ENCODE measurements at regions of chr6 and their contacts with region 1.

Region 1: GRCh38 chr6:43608310-43608763 is 20.7 kb downstream of the GTPBP2 start:
- DNase-seq: peak in 8 of 9 donors; percentile 12 to 49 (median 43)
- ATAC-seq: peak; percentile 57
- H3K4me3 ChIP-seq: no peak overlapping the region
- H3K4me3 Mint-ChIP-seq: no peak overlapping the region
- H3K27ac ChIP-seq: no peak overlapping the region
- H3K27ac Mint-ChIP-seq: peak overlapping the region in 4 of 9 donors; percentile 0 to 16 (median 4)
- H3K4me1 ChIP-seq: no peaks in the 10 kb centered on the region
- H3K4me1 Mint-ChIP-seq: peaks cover 0 to 10% (median 5%) of the 10 kb centered on the region in 7 donors
- H3K27me3 ChIP-seq: no peaks in the 10 kb centered on the region
- H3K27me3 Mint-ChIP-seq: no peaks in the 10 kb centered on the region

Region 2: GRCh38 chr6:43635387-43636307 is 27.3 kb after region 1 on chr6 and contains the start of gene MAD2L1BP:
- CTCF ChIA-PET with region 1: no interaction called
- POLR2A ChIA-PET with region 1: interaction called, 5 read pairs
- intact Hi-C with region 1: loop called in 1 of 2 experiments (anchors 1 kb)
- DNase-seq: peak; percentile 65 to 92 (median 88)
- ATAC-seq: peak; percentile 94
- H3K4me3 ChIP-seq: peak within 1 kb of the TSS; percentile 91
- H3K4me3 Mint-ChIP-seq: peak within 1 kb of the TSS; percentile 92 to 100 (median 99)
- H3K27ac ChIP-seq: peak within 1 kb of the TSS; percentile 87
- H3K27ac Mint-ChIP-seq: peak within 1 kb of the TSS; percentile 93 to 98 (median 96)
- H3K4me1 ChIP-seq: peaks cover 28 to 30% of the 10 kb centered on the region in 2 donors
- H3K4me1 Mint-ChIP-seq: peaks cover 34 to 65% (median 48%) of the 10 kb centered on the region in 7 donors
- H3K27me3 ChIP-seq: no peaks in the 10 kb centered on the region
- H3K27me3 Mint-ChIP-seq: peaks cover 0 to 3% (median 0%) of the 10 kb centered on the region in 5 donors
- total RNA-seq, gene MAD2L1BP: 25.2 to 44.5 (median 28.0) TPM

Region 3: DNA sequence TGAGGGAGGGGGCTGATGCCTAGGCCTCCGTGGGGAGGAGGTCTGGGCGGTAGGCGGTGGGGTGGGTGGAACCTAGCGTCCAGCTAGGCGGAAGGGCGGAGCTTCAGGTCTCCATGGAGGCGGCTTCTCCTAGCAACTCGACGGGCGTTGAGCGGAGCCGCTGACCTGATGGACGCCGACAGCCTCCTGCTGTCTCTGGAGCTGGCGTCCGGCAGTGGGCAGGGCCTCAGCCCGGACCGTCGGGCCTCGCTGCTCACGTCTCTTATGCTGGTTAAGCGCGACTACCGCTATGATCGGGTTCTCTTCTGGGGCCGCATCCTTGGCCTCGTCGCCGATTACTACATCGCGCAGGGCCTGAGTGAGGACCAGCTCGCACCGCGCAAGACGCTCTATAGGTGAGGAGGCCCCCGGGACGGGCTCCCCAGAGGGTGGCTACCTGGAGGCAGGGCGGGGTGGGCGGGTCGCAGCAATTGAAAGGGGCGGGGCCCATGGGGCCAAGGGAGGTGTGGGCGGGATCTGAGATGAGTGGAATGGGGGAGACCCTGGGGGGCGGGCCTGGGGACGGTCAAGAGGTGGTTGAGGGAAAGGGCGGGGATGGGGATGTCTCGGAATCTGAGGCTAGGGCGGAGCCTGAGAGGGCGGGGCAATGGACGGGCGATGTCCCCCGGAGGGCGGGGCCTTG is 36.7 kb after region 1 on chr6 and contains the start of gene RSPH9:
- CTCF ChIA-PET with region 1: no interaction called
- POLR2A ChIA-PET with region 1: interaction called, 3 read pairs
- intact Hi-C with region 1: loop called in 1 of 2 experiments (anchors 2 kb)
- DNase-seq: peak in 8 of 9 donors; percentile 35 to 70 (median 45)
- ATAC-seq: peak; percentile 86
- H3K4me3 ChIP-seq: peak within 1 kb of the TSS; percentile 52
- H3K4me3 Mint-ChIP-seq: peak within 1 kb of the TSS; percentile 75 to 92 (median 86)
- H3K27ac ChIP-seq: peak within 1 kb of the TSS; percentile 41
- H3K27ac Mint-ChIP-seq: peak within 1 kb of the TSS; percentile 26 to 79 (median 66)
- H3K4me1 ChIP-seq: no peaks in the 10 kb centered on the region
- H3K4me1 Mint-ChIP-seq: peaks cover 12 to 34% (median 22%) of the 10 kb centered on the region in 7 donors
- H3K27me3 ChIP-seq: no peaks in the 10 kb centered on the region
- H3K27me3 Mint-ChIP-seq: no peaks in the 10 kb centered on the region
- total RNA-seq, gene RSPH9: not detected

Region 4: GRCh38 chr6:43758617-43759050 is 150.3 kb after region 1 on chr6:
- CTCF ChIA-PET with region 1: no interaction called
- POLR2A ChIA-PET with region 1: no interaction called
- intact Hi-C with region 1: loop called in 1 of 2 experiments (anchors 5 kb)
- DNase-seq: peak in 1 of 9 donors; percentile 42
- ATAC-seq: peak; percentile 58
- H3K4me3 ChIP-seq: no peak overlapping the region
- H3K4me3 Mint-ChIP-seq: no peak overlapping the region
- H3K27ac ChIP-seq: no peak overlapping the region
- H3K27ac Mint-ChIP-seq: peak overlapping the region in 1 of 9 donors; percentile 46
- H3K4me1 ChIP-seq: no peaks in the 10 kb centered on the region
- H3K4me1 Mint-ChIP-seq: peaks cover 0 to 3% (median 0%) of the 10 kb centered on the region in 7 donors
- H3K27me3 ChIP-seq: no peaks in the 10 kb centered on the region
- H3K27me3 Mint-ChIP-seq: peaks cover 0 to 16% (median 0%) of the 10 kb centered on the region in 5 donors

Region 5: DNA sequence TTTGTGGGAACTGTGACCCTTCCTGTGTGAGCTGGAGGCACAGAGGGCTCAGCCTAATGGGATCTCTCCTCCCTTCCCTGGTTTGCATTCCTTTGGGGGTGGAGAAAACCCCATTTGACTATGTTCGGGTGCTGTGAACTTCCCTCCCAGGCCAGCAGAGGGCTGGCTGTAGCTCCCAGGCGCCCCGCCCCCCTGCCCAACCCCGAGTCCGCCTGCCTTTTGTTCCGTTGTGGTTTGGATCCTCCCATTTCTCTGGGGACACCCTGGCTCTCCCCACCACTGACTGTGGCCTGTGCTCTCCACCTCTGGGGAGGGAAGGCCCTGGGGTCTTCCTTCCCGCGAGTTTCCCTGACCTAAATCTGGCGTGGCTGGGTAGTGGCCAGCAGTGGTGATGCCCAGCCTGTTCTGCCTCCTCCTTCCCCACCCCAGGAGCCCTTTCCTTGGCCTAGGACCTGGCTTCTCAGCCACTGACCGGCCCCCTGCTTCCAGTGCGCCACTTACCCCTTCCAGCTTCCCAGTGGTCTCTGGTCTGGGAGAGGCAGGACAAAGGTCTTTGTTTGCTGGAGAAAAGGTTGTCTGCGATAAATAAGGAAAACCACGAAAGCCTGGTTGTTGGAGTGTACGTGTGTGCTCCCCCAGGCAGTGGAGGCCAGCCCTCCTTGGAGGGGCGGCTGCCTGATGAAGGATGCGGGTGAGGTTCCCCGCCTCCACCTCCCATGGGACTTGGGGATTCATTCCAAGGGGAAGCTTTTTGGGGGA is 166.6 kb after region 1 on chr6:
- CTCF ChIA-PET with region 1: no interaction called
- POLR2A ChIA-PET with region 1: no interaction called
- intact Hi-C with region 1: loop called in 1 of 2 experiments (anchors 1 kb)
- DNase-seq: peak in 7 of 9 donors; percentile 33 to 65 (median 43)
- ATAC-seq: peak; percentile 44
- H3K4me3 ChIP-seq: no peak overlapping the region
- H3K4me3 Mint-ChIP-seq: peak overlapping the region in 2 of 10 donors; percentile 14 to 68
- H3K27ac ChIP-seq: no peak overlapping the region
- H3K27ac Mint-ChIP-seq: peak overlapping the region in 2 of 9 donors; percentile 25 to 45
- H3K4me1 ChIP-seq: peaks cover 3 to 9% of the 10 kb centered on the region in 2 donors
- H3K4me1 Mint-ChIP-seq: peaks cover 5 to 49% (median 18%) of the 10 kb centered on the region in 7 donors
- H3K27me3 ChIP-seq: peaks cover 6 to 8% of the 10 kb centered on the region in 2 donors
- H3K27me3 Mint-ChIP-seq: peaks cover 0 to 17% (median 15%) of the 10 kb centered on the region in 5 donors

Region 6: DNA sequence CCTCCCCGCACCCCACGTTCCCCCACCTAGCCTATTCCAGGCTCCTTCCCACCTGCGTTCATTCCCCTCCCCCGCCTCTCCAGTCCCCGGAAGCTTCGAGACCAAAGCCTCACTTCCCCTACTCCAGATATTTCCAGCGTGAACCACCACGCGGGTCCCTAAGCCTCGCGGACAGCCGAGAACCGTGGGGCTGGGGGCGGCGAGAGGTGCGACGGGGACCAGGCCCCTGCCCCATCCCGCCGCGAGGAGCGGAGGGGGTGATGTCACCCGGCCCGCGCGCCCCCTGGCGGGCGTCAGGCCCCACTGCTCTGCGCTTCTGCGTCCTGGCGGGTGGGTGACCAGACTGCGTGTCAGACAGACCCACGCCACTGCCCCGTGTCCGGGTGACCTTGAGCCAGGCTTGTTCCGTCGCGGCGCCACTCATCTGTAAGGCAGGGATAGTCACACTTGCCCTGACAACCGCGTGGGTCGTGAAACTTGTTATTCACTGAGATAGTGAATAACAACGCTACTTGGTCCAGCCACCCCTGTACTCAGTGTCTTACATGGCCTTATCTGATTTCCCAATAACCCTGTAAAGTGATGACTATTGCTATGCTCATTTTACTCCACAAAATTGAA is 629.6 kb after region 1 on chr6:
- CTCF ChIA-PET with region 1: no interaction called
- POLR2A ChIA-PET with region 1: no interaction called
- intact Hi-C with region 1: no loop called
- DNase-seq: peak; percentile 62 to 87 (median 80)
- ATAC-seq: peak; percentile 94
- H3K4me3 ChIP-seq: peak overlapping the region; percentile 93
- H3K4me3 Mint-ChIP-seq: peak overlapping the region; percentile 82 to 92 (median 90)
- H3K27ac ChIP-seq: peak overlapping the region; percentile 83
- H3K27ac Mint-ChIP-seq: peak overlapping the region; percentile 38 to 98 (median 89)
- H3K4me1 ChIP-seq: peaks cover 5 to 7% of the 10 kb centered on the region in 2 donors
- H3K4me1 Mint-ChIP-seq: peaks cover 0 to 28% (median 11%) of the 10 kb centered on the region in 7 donors
- H3K27me3 ChIP-seq: no peaks in the 10 kb centered on the region
- H3K27me3 Mint-ChIP-seq: no peaks in the 10 kb centered on the region

Measured in naive thymus-derived CD4-positive, alpha-beta T cell (primary cell).